HEK293 (cell line): ENCODE measurements at regions of chr1 and their contacts with region 1.

Region 1: DNA sequence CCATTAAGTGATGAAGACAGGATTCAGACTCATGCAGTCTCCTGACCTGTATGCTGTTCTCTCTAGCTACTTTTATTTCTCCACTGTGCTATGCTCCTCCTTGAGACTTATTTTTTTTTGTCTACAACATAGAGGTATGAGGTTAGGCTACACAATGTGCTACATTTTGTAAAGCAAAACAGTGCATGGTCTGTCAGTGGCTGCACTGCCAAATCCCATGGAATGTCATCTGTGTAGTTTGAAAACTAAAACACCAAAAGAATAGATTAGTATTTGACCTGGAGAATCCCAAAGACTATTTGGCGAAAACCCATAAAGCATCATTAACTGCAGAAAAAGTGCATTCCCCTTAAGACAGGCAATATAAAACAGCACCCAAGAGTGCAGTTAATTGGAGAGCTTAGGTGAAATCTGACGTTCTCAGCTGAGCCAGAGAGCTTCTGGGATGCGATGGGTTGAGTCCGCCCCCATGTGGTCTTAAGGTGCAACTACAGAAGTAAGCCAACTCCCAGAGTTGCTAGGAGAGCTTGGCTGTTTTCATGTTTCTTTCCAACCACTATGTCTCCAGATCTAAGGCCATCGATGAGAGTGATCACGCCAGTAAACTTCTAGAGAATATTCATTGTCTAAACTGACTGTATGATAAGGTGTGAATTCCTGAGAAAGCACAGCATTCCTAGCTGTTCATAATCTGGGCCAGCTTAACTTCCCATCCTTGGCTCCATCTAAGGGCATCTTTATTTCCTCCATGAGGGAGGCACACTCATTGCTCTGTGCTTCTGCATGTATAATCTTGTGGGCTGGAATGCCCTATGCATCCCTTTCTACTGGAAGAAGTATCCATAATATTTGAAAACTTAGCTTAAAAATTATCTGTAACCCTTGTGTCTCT is 20.7 kb upstream of the CYP2J2 start:
- H3K4me3 ChIP-seq: no peak overlapping the region
- H3K27ac ChIP-seq: no peak overlapping the region
- H3K4me1 ChIP-seq: no peaks in the 10 kb centered on the region
- CTCF ChIP-seq: peak; percentile 54; the same call in 1 of the 2 replicates

Region 2: GRCh38 chr1:59857679-59858354 is 89.5 kb before region 1 on chr1:
- CTCF ChIA-PET with region 1: interaction called, 12 read pairs
- POLR2A ChIA-PET with region 1: no interaction called
- H3K4me3 ChIP-seq: no peak overlapping the region
- H3K27ac ChIP-seq: no peak overlapping the region
- H3K4me1 ChIP-seq: no peaks in the 10 kb centered on the region
- CTCF ChIP-seq: no peak

Region 3: DNA sequence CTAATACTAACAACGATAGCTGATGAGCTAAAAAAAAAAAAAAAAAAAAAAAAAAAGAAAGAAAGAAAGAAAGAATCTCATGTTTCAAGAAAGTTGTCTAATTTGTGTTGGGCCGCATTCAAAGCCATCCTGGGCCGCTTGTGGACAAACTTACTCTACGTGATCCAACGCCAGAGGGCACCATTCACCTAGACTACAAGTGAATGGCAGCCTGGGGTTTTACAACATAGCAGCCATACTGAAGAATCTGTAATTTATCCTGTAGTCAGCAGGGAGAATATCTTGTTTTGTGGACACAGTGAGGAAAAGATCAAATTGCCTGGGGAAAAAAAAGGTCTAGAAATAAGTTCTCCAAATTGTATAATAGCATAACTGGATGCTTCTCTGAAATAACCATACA is 67.7 kb before region 1 on chr1:
- CTCF ChIA-PET with region 1: interaction called, 177 read pairs
- POLR2A ChIA-PET with region 1: no interaction called
- H3K4me3 ChIP-seq: no peak overlapping the region
- H3K27ac ChIP-seq: no peak overlapping the region
- H3K4me1 ChIP-seq: no peaks in the 10 kb centered on the region
- CTCF ChIP-seq: no peak

Region 4: DNA sequence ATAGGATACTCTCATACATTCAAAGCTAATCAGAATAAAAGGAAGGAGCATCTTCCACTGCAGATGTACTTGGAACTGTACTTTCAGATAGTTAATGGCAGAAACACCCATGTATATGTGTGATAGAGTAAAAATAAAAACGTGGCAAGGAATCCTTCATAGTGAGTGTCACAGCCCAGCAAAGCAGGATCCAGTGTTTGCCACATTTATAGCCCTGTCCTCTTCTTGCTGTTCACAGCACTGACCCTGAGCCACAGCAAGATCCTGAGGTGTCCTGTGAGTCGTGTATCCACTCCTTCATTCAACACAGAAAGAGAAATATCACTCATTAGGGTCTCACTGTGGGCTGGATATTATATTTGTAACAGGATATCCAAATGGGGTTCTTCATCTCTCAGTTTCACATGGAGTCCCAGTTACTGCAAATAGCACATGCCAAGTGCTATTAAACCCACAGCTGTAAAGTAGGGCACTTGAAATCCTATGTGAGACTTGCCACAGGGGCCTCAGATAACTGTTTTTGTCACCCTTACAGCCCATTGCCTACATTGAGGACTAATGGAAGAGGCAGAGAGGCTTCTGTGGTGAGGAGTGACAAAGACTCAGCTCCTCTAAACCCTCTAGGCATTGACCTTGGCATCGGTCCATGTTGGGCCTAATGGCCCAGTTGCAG is 62.0 kb before region 1 on chr1:
- CTCF ChIA-PET with region 1: interaction called, 177 read pairs
- POLR2A ChIA-PET with region 1: no interaction called
- H3K4me3 ChIP-seq: no peak overlapping the region
- H3K27ac ChIP-seq: no peak overlapping the region
- H3K4me1 ChIP-seq: no peaks in the 10 kb centered on the region
- CTCF ChIP-seq: no peak

Region 5: DNA sequence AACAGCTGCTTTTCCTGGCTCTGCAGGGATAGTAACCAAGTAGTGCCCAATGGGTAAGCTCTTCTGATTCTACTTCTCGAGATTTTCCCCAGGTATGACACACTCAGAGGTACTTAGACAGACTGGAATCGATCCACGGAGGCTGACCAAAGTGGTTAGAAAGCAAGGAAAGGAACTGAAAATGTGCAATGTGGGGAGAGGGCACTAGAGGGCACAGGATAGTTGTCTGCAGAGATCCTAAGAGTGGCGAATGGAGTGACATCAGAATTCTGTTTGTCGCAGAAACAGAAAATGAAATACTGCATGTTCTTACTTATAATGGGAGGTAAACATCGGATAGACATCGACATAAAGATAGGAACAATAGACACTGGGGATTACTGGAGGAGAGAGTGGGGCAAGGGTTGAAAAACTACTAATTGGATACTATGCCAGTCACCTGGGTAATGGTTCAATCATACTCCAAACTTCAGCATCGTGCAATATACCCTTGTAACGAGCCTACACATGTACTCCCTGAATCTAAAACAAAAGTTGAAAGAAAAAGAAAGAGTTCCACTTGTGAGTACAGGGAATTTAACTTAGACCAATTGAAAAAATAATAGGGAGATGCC is 44.0 kb before region 1 on chr1:
- CTCF ChIA-PET with region 1: interaction called, 59 read pairs
- POLR2A ChIA-PET with region 1: no interaction called
- H3K4me3 ChIP-seq: no peak overlapping the region
- H3K27ac ChIP-seq: no peak overlapping the region
- H3K4me1 ChIP-seq: no peaks in the 10 kb centered on the region
- CTCF ChIP-seq: peak; percentile 41; the same call in 1 of the 2 replicates

Region 6: GRCh38 chr1:59926381-59927123 is 20.7 kb before region 1 on chr1 and contains the start of gene CYP2J2:
- CTCF ChIA-PET with region 1: interaction called, 11 read pairs
- POLR2A ChIA-PET with region 1: no interaction called
- H3K4me3 ChIP-seq: peak within 1 kb of the TSS; percentile 54
- H3K27ac ChIP-seq: no peak within 1 kb of the TSS; the same call in 1 of the 2 replicates
- H3K4me1 ChIP-seq: peaks cover 3% of the 10 kb centered on the region; the same call in 1 of the 2 replicates
- CTCF ChIP-seq: no peak

Region 7: GRCh38 chr1:59971464-59971911 is 24.2 kb after region 1 on chr1:
- CTCF ChIA-PET with region 1: interaction called, 27 read pairs
- POLR2A ChIA-PET with region 1: no interaction called
- H3K4me3 ChIP-seq: no peak overlapping the region
- H3K27ac ChIP-seq: no peak overlapping the region
- H3K4me1 ChIP-seq: no peaks in the 10 kb centered on the region
- CTCF ChIP-seq: peak; percentile 89

Region 8: GRCh38 chr1:60054374-60054773 is 107.1 kb after region 1 on chr1:
- CTCF ChIA-PET with region 1: no interaction called
- POLR2A ChIA-PET with region 1: no interaction called
- H3K4me3 ChIP-seq: no peak overlapping the region
- H3K27ac ChIP-seq: no peak overlapping the region
- H3K4me1 ChIP-seq: no peaks in the 10 kb centered on the region
- CTCF ChIP-seq: no peak